Calu3 (cell line): ENCODE measurements at regions of chr2 and their contacts with region 1.

Region 1: DNA sequence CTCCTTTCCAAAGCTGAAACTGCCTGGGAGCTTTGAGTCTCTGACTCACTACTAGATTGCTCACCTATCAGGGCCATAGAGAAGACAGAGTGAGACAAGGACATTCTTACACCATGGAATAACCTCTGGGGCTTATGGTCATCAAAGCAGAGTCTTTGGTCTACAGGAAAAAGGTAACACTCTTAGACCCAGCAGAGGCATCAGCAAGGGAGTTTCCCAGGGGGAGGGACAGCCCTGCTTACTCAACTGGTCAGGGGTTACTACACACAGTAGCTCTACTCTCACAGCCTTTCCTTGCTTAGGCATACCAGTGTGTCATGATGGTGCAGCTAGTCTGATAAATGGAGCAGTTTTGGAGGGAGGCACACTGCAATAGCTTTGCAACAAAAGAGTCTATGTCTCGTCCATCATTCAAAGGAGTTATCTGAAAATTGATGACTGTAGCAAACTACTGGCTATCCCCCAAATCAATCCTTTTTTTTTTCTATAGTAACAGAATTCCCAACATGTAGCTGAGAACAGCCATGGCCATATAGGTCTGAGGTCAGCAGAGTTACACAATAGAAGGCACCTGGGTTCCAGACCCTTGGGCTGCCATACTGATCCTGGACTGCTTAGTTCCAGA is 22.4 kb upstream of the CD28 start:
- DNase-seq: peak; percentile 81
- H3K4me3 Mint-ChIP-seq: peak overlapping the region; percentile 52
- H3K27ac Mint-ChIP-seq: peak overlapping the region; percentile 100
- H3K4me1 Mint-ChIP-seq: peaks cover 76% of the 10 kb centered on the region
- H3K27me3 Mint-ChIP-seq: no peaks in the 10 kb centered on the region
- CTCF ChIP-seq: no peak

Region 2: DNA sequence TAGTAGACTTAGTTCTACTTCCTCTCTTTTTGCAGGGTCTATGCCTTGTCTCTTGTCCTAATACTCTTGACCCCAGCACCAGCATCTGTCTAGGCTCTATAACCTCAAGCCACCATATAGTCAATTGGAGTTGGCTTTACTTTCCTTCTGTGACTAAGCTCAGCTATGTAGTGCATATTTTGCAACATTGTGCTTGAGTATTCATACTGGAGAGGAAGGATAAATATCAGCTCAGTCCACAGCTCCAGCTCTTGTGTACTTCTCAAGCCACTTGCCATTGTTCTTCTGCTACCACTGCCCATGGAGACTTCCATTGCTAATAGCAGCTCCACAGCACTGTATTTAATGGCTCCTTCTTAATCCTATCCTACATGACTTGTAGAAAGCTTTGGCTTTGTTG is 13.1 kb before region 1 on chr2:
- CTCF ChIA-PET with region 1: interaction called, 15 read pairs
- intact Hi-C with region 1: no loop called
- DNase-seq: no peak
- H3K4me3 Mint-ChIP-seq: no peak overlapping the region
- H3K27ac Mint-ChIP-seq: peak overlapping the region; percentile 67
- H3K4me1 Mint-ChIP-seq: peaks cover 67% of the 10 kb centered on the region
- H3K27me3 Mint-ChIP-seq: no peaks in the 10 kb centered on the region
- CTCF ChIP-seq: no peak

Region 3: DNA sequence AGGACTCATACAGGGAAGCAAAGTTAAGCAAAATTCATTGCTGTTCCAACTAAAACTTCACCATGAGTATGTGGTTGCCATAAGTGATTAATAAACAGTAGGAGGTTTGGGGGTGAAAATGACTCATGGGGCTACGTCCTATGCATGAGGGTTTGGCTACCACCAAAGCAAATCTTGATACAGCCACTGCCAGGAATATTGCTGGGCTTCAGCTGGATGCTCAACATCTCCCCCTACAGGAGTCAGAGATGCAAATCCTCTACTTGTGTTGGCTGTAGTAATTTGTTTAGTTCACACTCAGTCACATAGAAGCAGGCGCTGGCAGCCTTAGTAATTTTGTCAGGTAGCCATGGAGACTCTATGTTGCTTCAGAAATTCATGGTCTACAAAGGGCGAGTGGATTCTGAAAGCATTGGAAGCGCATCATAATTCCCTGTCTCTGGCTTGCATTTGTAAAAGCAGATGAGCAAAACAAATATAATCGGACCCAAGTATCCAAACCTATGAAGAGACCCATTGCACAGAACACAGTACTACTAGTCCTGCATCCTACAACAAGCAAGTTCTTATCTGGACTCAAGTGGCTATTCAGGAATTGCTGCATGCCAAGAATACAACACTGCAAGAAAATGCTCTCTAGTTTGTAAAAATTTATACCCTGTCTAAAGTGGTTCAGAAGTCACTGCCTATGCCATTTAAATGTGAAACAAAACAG is 98.4 kb after region 1 on chr2:
- CTCF ChIA-PET with region 1: no interaction called
- intact Hi-C with region 1: loop called (anchors 2 kb)
- DNase-seq: peak; percentile 80
- H3K4me3 Mint-ChIP-seq: no peak overlapping the region
- H3K27ac Mint-ChIP-seq: peak overlapping the region; percentile 70
- H3K4me1 Mint-ChIP-seq: peaks cover 30% of the 10 kb centered on the region
- H3K27me3 Mint-ChIP-seq: no peaks in the 10 kb centered on the region
- CTCF ChIP-seq: peak; percentile 79